PC-9 (cell line): ENCODE measurements at regions of chr7 and their contacts with region 1.

Region 1: DNA sequence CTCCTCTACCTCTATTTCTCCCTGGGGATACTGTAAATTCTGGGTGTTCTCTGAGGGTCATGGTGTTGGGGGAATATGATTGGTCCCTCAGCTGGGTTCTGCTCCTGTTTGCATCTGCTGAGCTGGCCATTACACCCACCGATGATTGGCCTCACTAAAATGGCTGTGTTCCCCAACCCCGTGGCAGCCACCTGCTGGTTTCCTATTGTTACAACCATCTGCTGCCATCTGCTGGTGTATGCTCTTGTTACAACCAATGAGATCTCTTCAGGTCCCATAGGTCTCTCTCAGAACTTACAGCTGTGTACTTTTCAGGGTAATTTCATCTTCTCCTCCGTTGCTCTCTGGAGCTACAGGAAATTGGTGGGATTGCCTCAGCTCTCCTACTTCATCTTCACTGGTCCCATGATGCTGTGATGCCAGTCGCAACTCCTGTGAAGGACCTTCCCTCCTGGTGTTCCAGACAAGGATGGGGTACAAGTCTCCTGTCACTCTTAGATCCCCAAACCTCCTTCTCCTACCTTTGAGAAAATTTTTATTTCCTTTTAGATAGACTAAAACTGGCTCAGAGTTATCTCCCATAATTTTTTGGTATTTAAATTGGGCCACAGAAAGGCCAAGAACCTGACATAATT is 303.5 kb upstream of the SMIM30 start:
- DNase-seq: peak; percentile 63 to 65
- H3K4me3 ChIP-seq: no peak overlapping the region
- H3K27ac ChIP-seq: no peak overlapping the region
- H3K4me1 ChIP-seq: no peaks in the 10 kb centered on the region
- H3K27me3 ChIP-seq: no peaks in the 10 kb centered on the region
- CTCF ChIP-seq: peak; percentile 83

Region 2: GRCh38 chr7:111741811-111742240 is 1680.0 kb before region 1 on chr7:
- CTCF ChIA-PET with region 1: no interaction called
- POLR2A ChIA-PET with region 1: no interaction called
- intact Hi-C with region 1: loop called (anchors 2 kb)
- DNase-seq: peak; percentile 44 to 56
- H3K4me3 ChIP-seq: no peak overlapping the region
- H3K27ac ChIP-seq: no peak overlapping the region
- H3K4me1 ChIP-seq: no peaks in the 10 kb centered on the region
- H3K27me3 ChIP-seq: no peaks in the 10 kb centered on the region
- CTCF ChIP-seq: peak; percentile 76

Region 3: GRCh38 chr7:112550468-112551060 is 871.2 kb before region 1 on chr7:
- CTCF ChIA-PET with region 1: no interaction called
- POLR2A ChIA-PET with region 1: no interaction called
- intact Hi-C with region 1: loop called (anchors 1 kb)
- DNase-seq: peak; percentile 15 to 44
- H3K4me3 ChIP-seq: no peak overlapping the region
- H3K27ac ChIP-seq: no peak overlapping the region
- H3K4me1 ChIP-seq: no peaks in the 10 kb centered on the region
- H3K27me3 ChIP-seq: no peaks in the 10 kb centered on the region
- CTCF ChIP-seq: peak; percentile 88

Region 4: GRCh38 chr7:113015032-113015645 is 406.7 kb before region 1 on chr7:
- CTCF ChIA-PET with region 1: no interaction called
- POLR2A ChIA-PET with region 1: no interaction called
- intact Hi-C with region 1: loop called (anchors 1 kb)
- DNase-seq: no peak
- H3K4me3 ChIP-seq: no peak overlapping the region
- H3K27ac ChIP-seq: no peak overlapping the region
- H3K4me1 ChIP-seq: no peaks in the 10 kb centered on the region
- H3K27me3 ChIP-seq: no peaks in the 10 kb centered on the region
- CTCF ChIP-seq: peak; percentile 70

Region 5: GRCh38 chr7:113159746-113160339 is 262.0 kb before region 1 on chr7:
- CTCF ChIA-PET with region 1: interaction called, 7 read pairs
- POLR2A ChIA-PET with region 1: no interaction called
- intact Hi-C with region 1: loop called (anchors 1 kb)
- DNase-seq: peak in 1 of 2 experiments; percentile 14
- H3K4me3 ChIP-seq: no peak overlapping the region
- H3K27ac ChIP-seq: no peak overlapping the region
- H3K4me1 ChIP-seq: no peaks in the 10 kb centered on the region
- H3K27me3 ChIP-seq: no peaks in the 10 kb centered on the region
- CTCF ChIP-seq: peak; percentile 70

Region 6: GRCh38 chr7:113289140-113289740 is 132.6 kb before region 1 on chr7:
- CTCF ChIA-PET with region 1: interaction called, 13 read pairs
- POLR2A ChIA-PET with region 1: no interaction called
- intact Hi-C with region 1: no loop called
- DNase-seq: no peak
- H3K4me3 ChIP-seq: no peak overlapping the region
- H3K27ac ChIP-seq: no peak overlapping the region
- H3K4me1 ChIP-seq: no peaks in the 10 kb centered on the region; the same call in 1 of the 2 replicates
- H3K27me3 ChIP-seq: no peaks in the 10 kb centered on the region
- CTCF ChIP-seq: 0 out of 2 replicates have a peak, but pooled peaks have one; percentile 27

Region 7: DNA sequence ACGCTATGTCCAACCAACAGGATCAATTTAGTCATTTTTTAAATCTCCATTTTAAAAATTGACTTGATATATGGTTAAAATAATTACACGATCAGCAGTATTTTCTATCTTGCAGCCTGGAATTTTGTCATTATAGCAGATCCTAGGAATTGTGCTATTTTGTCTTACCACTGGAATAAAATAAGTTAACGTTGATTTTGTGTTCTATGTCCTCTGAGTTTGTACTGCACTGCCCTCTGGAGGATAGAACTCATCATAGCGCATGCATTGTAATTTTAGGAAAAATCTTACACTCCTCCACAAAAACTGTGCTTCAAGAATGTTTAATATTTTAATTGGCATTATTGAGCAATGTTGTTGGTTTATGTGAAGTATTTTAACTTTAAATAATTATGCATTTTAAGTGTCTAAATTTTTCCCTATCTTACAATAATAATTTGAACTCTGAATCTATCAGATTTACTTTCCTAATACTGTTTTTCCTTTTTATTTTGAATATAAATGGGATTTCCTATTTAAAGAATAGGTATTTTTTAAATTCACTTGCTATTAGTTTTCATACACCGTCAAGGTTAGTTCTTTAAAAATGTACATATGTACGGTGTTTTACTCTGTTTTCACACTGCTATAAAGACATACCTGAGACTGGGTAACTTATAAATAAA is 276.9 kb after region 1 on chr7:
- CTCF ChIA-PET with region 1: interaction called, 3 read pairs
- POLR2A ChIA-PET with region 1: no interaction called
- intact Hi-C with region 1: loop called (anchors 5 kb)
- DNase-seq: no peak
- H3K4me3 ChIP-seq: no peak overlapping the region
- H3K27ac ChIP-seq: no peak overlapping the region
- H3K4me1 ChIP-seq: no peaks in the 10 kb centered on the region
- H3K27me3 ChIP-seq: no peaks in the 10 kb centered on the region
- CTCF ChIP-seq: peak; percentile 76